Head of caudate nucleus (tissue), 42 donors: ENCODE measurements at regions of chr17 and their contacts with region 1.

Region 1: GRCh38 chr17:72725433-72726068 is 366.9 kb downstream of the SLC39A11 start:
- DNase-seq: peak; percentile 58 to 88 (median 77)

Region 2: GRCh38 chr17:72560303-72561247 is 165.0 kb before region 1 on chr17:
- intact Hi-C with region 1: loop called (anchors 5 kb)
- DNase-seq: peak in 39 of 42 donors; percentile 39 to 82 (median 62)

Region 3: GRCh38 chr17:72976971-72977770 is 251.6 kb after region 1 on chr17:
- intact Hi-C with region 1: loop called (anchors 10 kb)
- DNase-seq: peak in 8 of 42 donors; percentile 7 to 46 (median 24)

Region 4: DNA sequence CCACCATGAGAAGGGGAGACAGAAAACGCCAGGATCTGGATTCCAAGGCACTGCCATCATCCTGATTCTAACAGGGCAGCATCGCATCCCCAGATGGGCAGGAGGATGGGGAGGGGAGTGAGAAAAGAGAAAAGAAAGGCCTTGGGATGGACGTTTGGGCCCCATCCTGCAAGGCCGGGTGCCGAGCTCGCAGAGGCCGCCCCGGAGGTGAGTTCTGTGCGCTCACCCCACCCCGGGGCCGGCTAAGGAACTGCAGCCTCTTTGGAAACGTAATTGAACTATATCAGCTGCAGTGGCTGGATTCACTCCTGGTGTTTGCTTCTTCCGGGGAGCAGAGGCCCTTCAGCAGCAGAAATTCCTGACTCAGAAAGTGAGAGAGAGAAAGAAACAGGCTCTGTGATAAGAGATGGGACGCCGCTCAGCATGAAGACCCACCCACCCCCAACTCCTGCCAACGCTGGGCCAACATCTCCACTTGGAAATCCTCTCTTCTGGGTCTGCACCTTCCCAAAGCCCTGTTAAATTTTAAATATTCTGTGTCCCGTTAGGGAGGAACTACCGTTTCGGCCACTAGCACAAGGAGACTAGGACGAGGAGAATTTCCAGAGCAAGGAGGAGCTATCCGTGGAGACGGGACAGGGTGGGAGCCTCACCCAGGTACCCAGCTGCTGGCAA is 430.8 kb after region 1 on chr17:
- intact Hi-C with region 1: loop called (anchors 10 kb)
- DNase-seq: peak; percentile 75 to 93 (median 82)

Region 5: DNA sequence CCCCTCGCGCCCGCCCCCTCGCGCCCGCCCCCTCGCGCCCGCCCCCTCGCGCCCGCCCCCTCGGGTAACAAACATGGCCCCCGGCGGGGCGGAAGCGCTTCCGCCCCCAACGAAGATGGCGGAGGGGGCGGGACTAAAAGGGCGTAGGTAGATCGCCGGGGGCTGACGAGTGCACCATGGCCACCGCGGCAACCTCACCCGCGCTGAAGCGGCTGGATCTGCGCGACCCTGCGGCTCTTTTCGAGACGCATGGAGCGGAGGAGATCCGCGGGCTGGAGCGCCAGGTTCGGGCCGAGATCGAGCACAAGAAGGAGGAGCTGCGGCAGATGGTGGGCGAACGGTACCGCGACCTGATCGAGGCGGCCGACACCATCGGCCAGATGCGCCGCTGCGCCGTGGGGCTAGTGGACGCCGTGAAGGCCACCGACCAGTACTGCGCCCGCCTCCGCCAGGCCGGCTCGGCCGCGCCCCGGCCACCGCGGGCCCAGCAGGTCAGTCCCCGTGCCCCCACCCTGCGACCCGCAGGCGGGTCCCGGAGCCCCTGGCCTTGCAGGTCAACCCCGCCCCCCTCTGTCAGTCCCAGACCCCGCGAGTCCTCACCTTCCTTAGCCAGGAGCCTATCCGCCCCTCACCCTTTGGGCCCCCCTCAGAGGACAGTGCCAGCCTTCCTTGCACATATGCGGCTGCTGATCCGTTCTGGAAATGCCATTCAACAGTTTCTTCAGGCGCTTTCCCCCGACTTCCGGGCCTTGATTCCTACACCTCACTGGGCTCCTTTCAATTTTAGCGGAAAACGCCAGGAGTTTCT is 467.5 kb after region 1 on chr17 and contains the start of gene COG1:
- intact Hi-C with region 1: loop called (anchors 10 kb)
- DNase-seq: peak; percentile 55 to 94 (median 83)

Region 6: GRCh38 chr17:73371285-73371684 is 645.7 kb after region 1 on chr17:
- intact Hi-C with region 1: loop called (anchors 10 kb)
- DNase-seq: no peak